Cardiac septum (tissue), 1 donor: ENCODE measurements at regions of chr19 and their contacts with region 1.

Region 1: DNA sequence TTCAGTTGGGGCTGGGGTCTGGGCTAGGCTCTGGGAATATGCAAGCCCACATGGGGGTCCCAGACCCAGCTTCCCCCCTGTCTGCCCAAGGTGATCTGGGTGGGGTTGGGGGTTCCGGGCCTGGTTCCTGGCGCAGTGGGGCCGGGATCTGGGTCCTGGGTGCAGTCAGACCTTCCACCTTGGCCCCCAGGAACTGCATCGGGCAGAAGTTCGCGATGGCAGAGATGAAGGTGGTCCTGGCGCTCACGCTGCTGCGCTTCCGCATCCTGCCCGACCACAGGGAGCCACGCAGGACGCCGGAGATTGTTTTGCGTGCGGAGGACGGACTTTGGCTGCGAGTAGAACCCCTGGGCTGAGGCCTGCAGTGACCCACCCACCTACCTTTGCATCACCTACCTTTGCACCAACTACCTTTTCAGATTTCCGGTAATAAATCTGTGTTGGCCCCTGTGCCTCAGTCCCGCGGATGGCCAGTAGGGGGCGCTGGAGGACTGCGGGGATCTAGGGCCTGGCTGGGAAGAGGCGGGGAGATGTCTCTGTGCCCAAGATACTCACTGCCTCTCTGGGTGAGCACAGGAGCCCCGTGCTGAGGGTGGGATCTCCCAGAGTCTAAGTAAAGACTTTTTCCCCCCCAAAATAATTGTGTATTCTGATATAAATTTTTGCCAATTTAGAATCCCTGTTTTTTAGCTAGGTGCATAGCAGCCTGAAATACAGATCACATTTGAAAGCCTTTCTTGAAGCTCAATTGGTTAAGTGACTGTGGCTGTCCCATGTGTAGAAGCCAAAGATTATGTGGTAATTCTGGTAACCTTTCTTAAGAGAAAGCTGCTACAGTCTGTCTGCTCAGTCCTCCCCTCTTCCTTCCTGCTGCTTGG is 11.5 kb upstream of the CYP4F3 start:
- DNase-seq: peak; percentile 93

Region 2: GRCh38 chr19:15584541-15585115 is 44.6 kb before region 1 on chr19:
- intact Hi-C with region 1: no loop called
- DNase-seq: peak; percentile 92

Region 3: DNA sequence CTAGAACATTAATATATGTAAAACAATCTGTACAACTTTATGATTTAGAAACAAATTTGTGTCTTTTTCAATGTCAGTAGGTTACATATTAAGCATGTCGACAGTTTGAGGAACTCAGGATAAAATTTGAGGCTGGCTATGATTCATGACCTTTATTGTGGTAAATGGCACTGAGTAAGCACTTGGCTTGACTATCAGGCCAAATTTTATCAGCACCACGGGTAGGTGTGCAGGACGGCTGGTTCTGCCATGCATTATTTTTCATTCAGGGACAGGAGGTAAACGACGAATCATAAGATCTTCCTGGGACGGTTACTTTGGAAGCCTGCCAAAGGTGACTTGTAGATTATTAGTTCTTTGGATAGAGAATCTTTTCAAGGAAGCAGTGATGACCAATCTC is 34.2 kb before region 1 on chr19:
- intact Hi-C with region 1: no loop called
- DNase-seq: no peak

Region 4: GRCh38 chr19:15810335-15810734 is 181.1 kb after region 1 on chr19:
- intact Hi-C with region 1: loop called (anchors 5 kb)
- DNase-seq: no peak

Region 5: DNA sequence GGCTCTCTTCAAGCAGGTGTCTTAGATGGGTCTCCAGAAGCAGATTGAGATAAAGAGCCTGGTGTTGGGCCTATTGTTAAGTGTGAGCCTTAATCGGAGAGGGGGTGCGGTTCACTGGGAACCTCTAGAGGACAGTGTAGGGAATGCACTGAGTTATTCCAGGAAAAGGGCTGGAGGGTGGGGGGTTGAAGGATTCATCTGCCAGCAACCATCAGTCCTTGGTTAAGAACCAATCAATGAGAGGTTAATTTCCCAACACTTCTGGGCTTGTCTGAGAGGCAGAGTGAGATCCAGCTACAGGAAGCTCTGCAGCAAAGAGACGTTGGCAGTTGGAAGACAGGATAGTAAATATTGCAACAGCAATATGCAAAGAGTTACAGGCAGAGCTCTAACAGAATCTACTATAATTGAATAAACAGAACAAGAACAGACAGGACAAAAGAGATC is 239.9 kb after region 1 on chr19:
- intact Hi-C with region 1: loop called (anchors 5 kb)
- DNase-seq: no peak

Region 6: GRCh38 chr19:16185123-16185767 is 556.0 kb after region 1 on chr19 and contains the start of gene FAM32A:
- intact Hi-C with region 1: loop called (anchors 5 kb)
- DNase-seq: peak; percentile 99
- total RNA-seq, gene FAM32A: 36.9 TPM